Activated T-helper 1 cell treated with anti-CD3 and anti-CD28 coated beads, Interleukin-12 subunit alpha, Interleukin-12 subunit beta, Interleukin-2, Interleukin-4 antibody, amounts not matched to agents 30 ng/mL and 10 ng/mL and 1 ng/mL, durations not matched to agents 14 hours and 24 hours and 36 hours (primary cell): ENCODE measurements at regions of chr1 and their contacts with region 1.

Region 1: GRCh38 chr1:64268653-64269557 is 65.5 kb downstream of the UBE2U start:
- DNase-seq: peak; percentile 25
- H3K4me3 Mint-ChIP-seq: no peak overlapping the region
- H3K27ac Mint-ChIP-seq: no peak overlapping the region
- H3K4me1 Mint-ChIP-seq: no peaks in the 10 kb centered on the region
- H3K27me3 Mint-ChIP-seq: peaks cover 5% of the 10 kb centered on the region

Region 2: DNA sequence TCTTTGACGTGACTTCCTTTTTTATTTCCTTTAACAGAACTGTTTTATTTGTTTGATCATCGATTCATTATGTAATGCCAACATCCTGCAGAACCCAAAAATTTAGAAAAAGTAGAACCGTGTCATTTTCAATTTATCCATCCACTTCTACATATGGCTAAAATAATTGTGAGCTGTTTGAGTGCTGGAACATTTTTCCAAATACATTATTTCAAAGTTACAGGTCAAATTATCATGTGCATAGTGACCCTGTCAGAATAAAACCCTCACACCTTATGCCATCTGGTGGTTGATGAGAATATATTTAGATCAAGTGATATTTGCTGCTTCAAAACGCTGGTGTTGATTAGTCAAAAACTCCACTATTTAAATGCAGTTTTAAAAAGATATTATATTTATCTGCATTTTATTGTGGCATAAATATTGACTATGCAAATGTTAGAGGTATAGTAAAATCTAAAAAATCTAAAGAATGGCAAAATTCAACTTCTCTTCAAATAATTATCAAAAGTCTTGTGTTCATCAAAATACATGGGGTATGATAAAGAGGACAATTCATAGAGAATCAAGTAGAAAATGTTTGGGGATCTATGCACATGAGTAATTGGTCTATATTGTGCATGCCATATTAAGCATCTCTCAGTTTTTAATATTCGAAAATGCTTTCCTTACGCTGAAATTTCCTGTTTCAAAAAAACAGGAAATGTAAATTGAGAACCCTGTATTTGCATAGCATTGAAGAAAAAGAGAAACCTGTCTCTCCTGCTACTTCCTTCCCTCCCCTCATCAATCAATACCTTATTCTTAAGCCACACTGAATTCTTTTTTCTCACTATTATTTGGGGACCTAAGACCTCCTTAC is 25.8 kb before region 1 on chr1:
- intact Hi-C with region 1: no loop called
- DNase-seq: no peak
- H3K4me3 Mint-ChIP-seq: peak overlapping the region; percentile 40
- H3K27ac Mint-ChIP-seq: no peak overlapping the region
- H3K4me1 Mint-ChIP-seq: peaks cover 11% of the 10 kb centered on the region
- H3K27me3 Mint-ChIP-seq: peaks cover 11% of the 10 kb centered on the region

Region 3: DNA sequence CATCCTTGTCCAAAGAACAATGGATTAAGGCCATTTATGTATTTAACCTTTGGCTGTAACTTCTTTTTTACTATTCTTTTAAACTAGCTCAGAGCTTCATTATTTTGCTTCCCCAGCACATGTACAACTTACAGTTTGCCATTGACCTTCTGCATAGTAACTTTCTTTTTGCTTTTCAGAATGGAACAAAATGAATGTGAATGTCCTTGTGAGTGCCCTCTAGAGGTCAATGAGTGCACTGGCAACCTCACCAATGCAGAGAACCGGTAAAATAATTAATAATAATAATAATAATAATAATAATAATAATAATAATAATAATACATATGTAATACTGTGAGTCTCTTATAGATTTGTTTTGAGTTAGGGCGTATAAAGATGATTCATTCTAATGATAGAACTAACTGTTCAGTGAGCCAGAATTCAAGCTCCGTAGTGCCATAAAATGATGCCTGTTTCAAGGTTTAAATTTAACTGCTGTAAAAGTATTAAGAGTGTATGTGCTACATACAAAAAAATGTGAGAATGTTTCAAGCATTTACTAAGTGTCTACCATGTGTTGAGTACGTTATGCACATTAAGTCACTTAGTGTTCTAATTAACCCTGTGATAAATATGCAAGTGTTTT is 406.9 kb after region 1 on chr1:
- intact Hi-C with region 1: loop called (anchors 1 kb)
- DNase-seq: no peak
- H3K4me3 Mint-ChIP-seq: no peak overlapping the region
- H3K27ac Mint-ChIP-seq: no peak overlapping the region
- H3K4me1 Mint-ChIP-seq: no peaks in the 10 kb centered on the region
- H3K27me3 Mint-ChIP-seq: peaks cover 2% of the 10 kb centered on the region

Region 4: GRCh38 chr1:65002508-65003315 is 733.8 kb after region 1 on chr1:
- intact Hi-C with region 1: no loop called
- DNase-seq: peak; percentile 58
- H3K4me3 Mint-ChIP-seq: peak overlapping the region; percentile 74
- H3K27ac Mint-ChIP-seq: peak overlapping the region; percentile 25
- H3K4me1 Mint-ChIP-seq: peaks cover 25% of the 10 kb centered on the region
- H3K27me3 Mint-ChIP-seq: peaks cover 23% of the 10 kb centered on the region